ENCODE measurements at regions of chr4 and their contacts with region 1.

Region 1: GRCh38 chr4:11149612-11150259 is 279.0 kb downstream of the HS3ST1 start:
- DNase-seq: no peak
- ATAC-seq: peak; percentile 77
- H3K4me3 Mint-ChIP-seq: peak overlapping the region; percentile 36
- H3K27ac Mint-ChIP-seq: peak overlapping the region; percentile 32
- H3K4me1 Mint-ChIP-seq: peaks cover 23% of the 10 kb centered on the region
- H3K27me3 Mint-ChIP-seq: no peaks in the 10 kb centered on the region
- CTCF ChIP-seq: no peak

Region 2: GRCh38 chr4:11111876-11112275 is 37.9 kb before region 1 on chr4:
- CTCF ChIA-PET with region 1: no interaction called
- POLR2A ChIA-PET with region 1: no interaction called
- intact Hi-C with region 1: no loop called
- DNase-seq: no peak
- ATAC-seq: no peak
- H3K4me3 Mint-ChIP-seq: no peak overlapping the region
- H3K27ac Mint-ChIP-seq: no peak overlapping the region
- H3K4me1 Mint-ChIP-seq: peaks cover 26% of the 10 kb centered on the region
- H3K27me3 Mint-ChIP-seq: no peaks in the 10 kb centered on the region
- CTCF ChIP-seq: no peak

Region 3: DNA sequence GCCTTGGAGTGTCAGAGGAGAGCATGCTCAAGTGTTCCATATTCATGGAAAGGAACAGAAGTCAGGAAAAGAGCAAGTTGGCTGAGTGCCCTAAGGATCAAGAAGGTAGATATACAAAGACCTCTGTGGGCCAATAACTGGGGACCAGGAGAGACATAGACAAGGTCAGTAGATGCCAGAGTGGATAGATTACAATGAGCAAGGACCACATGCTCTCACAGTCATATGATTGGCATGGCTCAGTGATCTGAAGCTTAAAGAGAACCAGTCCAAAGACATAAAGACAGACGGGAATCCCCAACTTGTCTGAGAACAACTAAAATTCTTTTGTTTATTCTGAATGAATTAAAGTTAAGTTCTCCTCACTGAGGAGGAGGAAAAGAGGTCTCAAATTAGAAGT is 10.8 kb before region 1 on chr4:
- CTCF ChIA-PET with region 1: no interaction called
- POLR2A ChIA-PET with region 1: no interaction called
- intact Hi-C with region 1: loop called (anchors 1 kb)
- DNase-seq: no peak
- ATAC-seq: peak; percentile 87
- H3K4me3 Mint-ChIP-seq: peak overlapping the region; percentile 17
- H3K27ac Mint-ChIP-seq: peak overlapping the region; percentile 54
- H3K4me1 Mint-ChIP-seq: peaks cover 64% of the 10 kb centered on the region
- H3K27me3 Mint-ChIP-seq: no peaks in the 10 kb centered on the region
- CTCF ChIP-seq: no peak

Region 4: DNA sequence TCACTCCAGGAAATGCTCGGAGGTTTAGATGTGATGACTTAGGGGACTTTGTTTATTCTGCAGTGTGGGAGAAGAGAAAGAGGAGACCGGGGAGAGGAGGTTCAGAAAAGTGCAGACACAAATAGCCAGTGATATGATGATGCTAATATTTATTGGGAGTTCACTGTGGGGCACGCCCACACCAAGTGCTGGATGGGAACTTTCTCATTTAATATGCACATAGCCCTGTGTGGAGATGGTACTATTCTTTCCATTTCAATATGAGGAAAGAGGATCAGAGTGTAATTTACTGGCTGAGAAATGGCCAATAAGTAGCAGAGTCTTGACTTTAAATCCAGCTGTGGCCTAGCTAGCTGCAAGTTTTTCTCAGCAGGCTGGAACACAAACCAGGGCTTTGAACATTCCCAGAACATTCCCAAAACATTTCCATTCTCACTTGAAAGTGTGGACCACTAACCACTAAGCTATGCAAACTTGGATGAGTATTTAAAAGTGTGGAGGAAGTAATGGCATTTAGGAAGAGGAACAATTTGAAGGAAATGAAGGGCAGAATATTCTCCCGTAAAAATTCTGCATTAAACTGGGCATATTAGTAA is 47.3 kb after region 1 on chr4:
- CTCF ChIA-PET with region 1: no interaction called
- POLR2A ChIA-PET with region 1: no interaction called
- intact Hi-C with region 1: loop called (anchors 2 kb)
- DNase-seq: no peak
- ATAC-seq: no peak
- H3K4me3 Mint-ChIP-seq: no peak overlapping the region
- H3K27ac Mint-ChIP-seq: no peak overlapping the region
- H3K4me1 Mint-ChIP-seq: peaks cover 8% of the 10 kb centered on the region
- H3K27me3 Mint-ChIP-seq: no peaks in the 10 kb centered on the region
- CTCF ChIP-seq: no peak

Measured in activated B cell treated with CpG ODN at 0.5 μM for 24 hours (primary cell).